Activated B cell treated with CpG ODN at 0.5 μM for 24 hours (primary cell): ENCODE measurements at regions of chr20 and their contacts with region 1.

Region 1: GRCh38 chr20:48722737-48723191 is 105.0 kb downstream of the PREX1 start:
- DNase-seq: no peak
- ATAC-seq: peak; percentile 52
- H3K4me3 Mint-ChIP-seq: peak overlapping the region; percentile 47
- H3K27ac Mint-ChIP-seq: peak overlapping the region; percentile 84
- H3K4me1 Mint-ChIP-seq: peaks cover 70% of the 10 kb centered on the region
- H3K27me3 Mint-ChIP-seq: no peaks in the 10 kb centered on the region
- CTCF ChIP-seq: no peak

Region 2: GRCh38 chr20:48609491-48609978 is 113.2 kb before region 1 on chr20:
- CTCF ChIA-PET with region 1: no interaction called
- POLR2A ChIA-PET with region 1: no interaction called
- intact Hi-C with region 1: no loop called
- DNase-seq: no peak
- ATAC-seq: peak; percentile 14
- H3K4me3 Mint-ChIP-seq: no peak overlapping the region
- H3K27ac Mint-ChIP-seq: no peak overlapping the region
- H3K4me1 Mint-ChIP-seq: no peaks in the 10 kb centered on the region
- H3K27me3 Mint-ChIP-seq: peaks cover 3% of the 10 kb centered on the region
- CTCF ChIP-seq: no peak

Region 3: DNA sequence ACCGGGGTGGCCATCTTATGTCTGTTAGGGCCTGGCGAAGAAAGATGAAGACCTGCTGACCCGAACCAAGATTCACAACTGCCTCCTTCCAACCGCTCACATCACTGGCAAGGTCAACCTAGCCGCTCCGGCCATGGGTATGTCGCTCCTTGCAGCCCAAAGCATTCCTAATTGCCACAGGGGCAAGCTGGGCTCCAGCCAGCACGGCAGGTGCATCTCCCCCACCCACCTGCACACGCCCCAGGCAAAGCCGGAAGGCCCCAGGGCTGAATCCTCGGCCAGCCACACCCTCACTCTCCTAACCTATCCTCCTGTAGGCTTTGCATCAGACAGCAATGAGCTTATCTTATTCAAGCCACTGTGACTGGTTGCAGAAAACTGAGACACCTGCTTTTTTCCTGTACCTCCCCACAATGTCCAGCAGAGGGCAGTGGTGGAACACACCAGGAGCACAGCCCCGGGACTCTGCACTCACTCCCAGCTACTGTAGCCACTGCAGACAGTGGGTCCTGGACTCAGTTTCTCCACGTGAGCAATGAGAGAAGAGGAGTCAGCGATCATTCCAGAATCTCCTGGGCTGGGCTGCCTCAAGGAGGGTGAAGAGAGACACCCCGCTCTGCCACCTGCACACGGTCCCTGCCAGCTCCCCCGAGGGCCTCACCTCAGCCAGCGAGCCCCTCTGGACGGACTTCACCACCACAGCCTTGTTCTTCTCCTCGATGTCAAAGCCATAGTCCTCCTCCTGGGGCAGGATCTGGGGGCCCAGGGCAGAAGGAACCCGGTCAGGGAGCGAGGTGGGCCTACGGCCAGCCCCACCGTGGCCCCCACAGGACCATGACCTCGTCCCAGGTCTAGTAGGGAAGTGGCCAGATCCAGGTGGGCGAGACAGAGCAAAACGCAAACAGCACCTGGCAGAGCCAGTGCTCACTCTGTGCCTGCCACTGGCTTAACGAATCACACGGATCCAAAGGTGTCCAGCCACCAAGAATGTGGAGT is 65.0 kb before region 1 on chr20:
- CTCF ChIA-PET with region 1: interaction called, 12 read pairs
- POLR2A ChIA-PET with region 1: no interaction called
- intact Hi-C with region 1: no loop called
- DNase-seq: peak; percentile 46
- ATAC-seq: peak; percentile 95
- H3K4me3 Mint-ChIP-seq: no peak overlapping the region
- H3K27ac Mint-ChIP-seq: no peak overlapping the region
- H3K4me1 Mint-ChIP-seq: peaks cover 5% of the 10 kb centered on the region
- H3K27me3 Mint-ChIP-seq: no peaks in the 10 kb centered on the region
- CTCF ChIP-seq: peak; percentile 78

Region 4: DNA sequence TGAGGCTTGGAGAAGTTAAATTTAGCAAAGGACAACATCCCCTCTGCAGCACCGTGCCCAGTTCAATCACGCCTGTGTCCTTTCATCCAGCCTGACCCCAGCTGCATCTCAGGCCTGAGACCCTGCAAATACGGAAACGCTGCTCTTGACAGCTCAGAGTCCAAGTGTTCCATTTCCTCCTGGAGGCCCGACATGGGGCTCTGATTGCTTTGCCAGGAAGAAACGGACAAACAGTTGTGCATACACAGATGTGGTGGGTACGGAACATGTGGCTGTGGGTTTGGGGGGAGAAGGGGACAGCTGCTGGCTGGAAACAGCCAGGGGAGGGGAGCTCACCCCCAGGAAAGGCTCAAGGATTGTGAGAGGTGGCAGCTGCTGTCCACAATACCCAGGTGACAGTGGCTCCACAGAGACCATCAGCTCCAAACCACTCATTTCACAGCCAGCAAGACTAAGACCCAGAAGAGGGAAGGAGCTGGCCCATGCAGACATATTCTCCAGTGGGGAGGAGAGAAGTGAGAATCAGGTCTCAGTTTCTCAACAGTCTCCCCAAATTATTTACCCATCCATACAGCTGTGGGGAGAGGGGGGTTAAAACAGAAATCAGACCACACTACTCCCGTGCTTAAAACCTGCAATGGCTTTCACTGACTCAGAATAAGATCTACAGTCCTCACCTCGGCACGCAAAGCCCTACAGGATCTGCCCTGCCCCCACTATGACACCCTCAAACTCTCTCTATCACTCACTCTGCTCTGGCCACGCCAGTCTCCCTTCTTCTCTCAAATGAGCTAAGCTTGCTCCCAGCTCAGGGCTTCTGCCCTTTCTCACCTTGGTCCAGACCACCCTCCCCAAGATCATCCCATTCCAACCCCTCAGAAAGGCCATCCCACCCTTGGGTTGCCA is 15.9 kb after region 1 on chr20:
- CTCF ChIA-PET with region 1: no interaction called
- POLR2A ChIA-PET with region 1: interaction called, 18 read pairs
- intact Hi-C with region 1: loop called (anchors 1 kb)
- DNase-seq: no peak
- ATAC-seq: peak; percentile 72
- H3K4me3 Mint-ChIP-seq: peak overlapping the region; percentile 45
- H3K27ac Mint-ChIP-seq: peak overlapping the region; percentile 83
- H3K4me1 Mint-ChIP-seq: peaks cover 59% of the 10 kb centered on the region
- H3K27me3 Mint-ChIP-seq: no peaks in the 10 kb centered on the region
- CTCF ChIP-seq: no peak

Region 5: GRCh38 chr20:48760403-48760983 is 37.7 kb after region 1 on chr20:
- CTCF ChIA-PET with region 1: no interaction called
- POLR2A ChIA-PET with region 1: interaction called, 8 read pairs
- intact Hi-C with region 1: loop called (anchors 2 kb)
- DNase-seq: no peak
- ATAC-seq: peak; percentile 73
- H3K4me3 Mint-ChIP-seq: peak overlapping the region; percentile 75
- H3K27ac Mint-ChIP-seq: peak overlapping the region; percentile 95
- H3K4me1 Mint-ChIP-seq: peaks cover 91% of the 10 kb centered on the region
- H3K27me3 Mint-ChIP-seq: no peaks in the 10 kb centered on the region
- CTCF ChIP-seq: no peak

Region 6: GRCh38 chr20:48787861-48788375 is 65.2 kb after region 1 on chr20:
- CTCF ChIA-PET with region 1: interaction called, 3 read pairs
- POLR2A ChIA-PET with region 1: interaction called, 24 read pairs
- intact Hi-C with region 1: loop called (anchors 2 kb)
- DNase-seq: peak; percentile 18
- ATAC-seq: peak; percentile 16
- H3K4me3 Mint-ChIP-seq: peak overlapping the region; percentile 21
- H3K27ac Mint-ChIP-seq: peak overlapping the region; percentile 88
- H3K4me1 Mint-ChIP-seq: no peaks in the 10 kb centered on the region
- H3K27me3 Mint-ChIP-seq: no peaks in the 10 kb centered on the region
- CTCF ChIP-seq: no peak

Region 7: GRCh38 chr20:48912065-48912762 is 189.4 kb after region 1 on chr20:
- CTCF ChIA-PET with region 1: no interaction called
- POLR2A ChIA-PET with region 1: interaction called, 3 read pairs
- intact Hi-C with region 1: loop called (anchors 5 kb)
- DNase-seq: peak; percentile 55
- ATAC-seq: peak; percentile 97
- H3K4me3 Mint-ChIP-seq: peak overlapping the region; percentile 32
- H3K27ac Mint-ChIP-seq: peak overlapping the region; percentile 84
- H3K4me1 Mint-ChIP-seq: peaks cover 37% of the 10 kb centered on the region
- H3K27me3 Mint-ChIP-seq: no peaks in the 10 kb centered on the region
- CTCF ChIP-seq: no peak

Region 8: GRCh38 chr20:50438986-50439407 is 1716.2 kb after region 1 on chr20:
- CTCF ChIA-PET with region 1: no interaction called
- POLR2A ChIA-PET with region 1: no interaction called
- intact Hi-C with region 1: no loop called
- DNase-seq: no peak
- ATAC-seq: no peak
- H3K4me3 Mint-ChIP-seq: no peak overlapping the region
- H3K27ac Mint-ChIP-seq: no peak overlapping the region
- H3K4me1 Mint-ChIP-seq: no peaks in the 10 kb centered on the region
- H3K27me3 Mint-ChIP-seq: peaks cover 6% of the 10 kb centered on the region
- CTCF ChIP-seq: no peak